OCI-LY7 (cell line): ENCODE measurements at regions of chr1 and their contacts with region 1.

Region 1: GRCh38 chr1:111346089-111346885 is 55.6 kb downstream of the CHIA start:
- DNase-seq: peak; percentile 78
- H3K4me3 ChIP-seq: peak overlapping the region; percentile 62
- H3K27ac ChIP-seq: no peak overlapping the region
- H3K4me1 ChIP-seq: peaks cover 8% of the 10 kb centered on the region
- CTCF ChIP-seq: peak; percentile 60

Region 2: DNA sequence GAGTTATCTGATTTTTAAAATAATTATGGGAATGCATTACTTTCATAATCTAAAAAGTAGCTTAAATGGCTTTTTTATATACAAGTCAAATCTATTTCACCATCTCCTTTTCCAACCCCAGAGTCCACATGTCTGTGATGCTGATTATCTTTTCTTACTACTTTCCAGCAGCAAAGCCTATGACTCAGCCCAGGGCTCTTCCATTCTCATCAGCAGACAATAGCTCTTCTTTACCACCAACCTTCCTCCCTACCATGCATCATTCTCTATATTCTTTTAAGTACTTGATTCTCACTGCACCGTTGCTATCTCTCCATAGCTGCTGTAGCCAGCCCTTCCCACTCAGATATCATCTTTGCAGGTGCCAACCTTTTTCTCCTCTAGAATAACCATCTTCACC is 20.0 kb after region 1 on chr1:
- CTCF ChIA-PET with region 1: no interaction called
- POLR2A ChIA-PET with region 1: no interaction called
- intact Hi-C with region 1: no loop called
- DNase-seq: no peak
- H3K4me3 ChIP-seq: no peak overlapping the region
- H3K27ac ChIP-seq: no peak overlapping the region
- H3K4me1 ChIP-seq: no peaks in the 10 kb centered on the region
- CTCF ChIP-seq: no peak

Region 3: GRCh38 chr1:111399792-111400610 is 53.7 kb after region 1 on chr1:
- CTCF ChIA-PET with region 1: no interaction called
- POLR2A ChIA-PET with region 1: interaction called, 3 read pairs
- intact Hi-C with region 1: loop called (anchors 5 kb)
- DNase-seq: peak; percentile 67
- H3K4me3 ChIP-seq: no peak overlapping the region
- H3K27ac ChIP-seq: no peak overlapping the region
- H3K4me1 ChIP-seq: peaks cover 25% of the 10 kb centered on the region
- CTCF ChIP-seq: peak; percentile 86

Region 4: GRCh38 chr1:111448918-111449702 is 102.8 kb after region 1 on chr1 and contains the starts of genes ATP5PB and WDR77:
- CTCF ChIA-PET with region 1: no interaction called
- POLR2A ChIA-PET with region 1: no interaction called
- intact Hi-C with region 1: loop called (anchors 10 kb)
- DNase-seq: peak; percentile 100
- H3K4me3 ChIP-seq: peak within 1 kb of the TSS; percentile 98
- H3K27ac ChIP-seq: peak within 1 kb of the TSS; percentile 39
- H3K4me1 ChIP-seq: peaks cover 32% of the 10 kb centered on the region
- CTCF ChIP-seq: no peak
- total RNA-seq, gene ATP5PB: 286 and 291 TPM in 2 replicates
- total RNA-seq, gene WDR77: 63.0 and 97.3 TPM in 2 replicates